MCF 10A (cell line): ENCODE measurements at regions of chr1 and their contacts with region 1.

Region 1: GRCh38 chr1:209839875-209840491 is 12.2 kb downstream of the UTP25 start:
- DNase-seq: peak; percentile 99
- H3K4me3 Mint-ChIP-seq: peak overlapping the region; percentile 29
- H3K27ac Mint-ChIP-seq: peak overlapping the region; percentile 82
- H3K4me1 Mint-ChIP-seq: peaks cover 30% of the 10 kb centered on the region
- H3K27me3 Mint-ChIP-seq: no peaks in the 10 kb centered on the region
- CTCF ChIP-seq: no peak

Region 2: DNA sequence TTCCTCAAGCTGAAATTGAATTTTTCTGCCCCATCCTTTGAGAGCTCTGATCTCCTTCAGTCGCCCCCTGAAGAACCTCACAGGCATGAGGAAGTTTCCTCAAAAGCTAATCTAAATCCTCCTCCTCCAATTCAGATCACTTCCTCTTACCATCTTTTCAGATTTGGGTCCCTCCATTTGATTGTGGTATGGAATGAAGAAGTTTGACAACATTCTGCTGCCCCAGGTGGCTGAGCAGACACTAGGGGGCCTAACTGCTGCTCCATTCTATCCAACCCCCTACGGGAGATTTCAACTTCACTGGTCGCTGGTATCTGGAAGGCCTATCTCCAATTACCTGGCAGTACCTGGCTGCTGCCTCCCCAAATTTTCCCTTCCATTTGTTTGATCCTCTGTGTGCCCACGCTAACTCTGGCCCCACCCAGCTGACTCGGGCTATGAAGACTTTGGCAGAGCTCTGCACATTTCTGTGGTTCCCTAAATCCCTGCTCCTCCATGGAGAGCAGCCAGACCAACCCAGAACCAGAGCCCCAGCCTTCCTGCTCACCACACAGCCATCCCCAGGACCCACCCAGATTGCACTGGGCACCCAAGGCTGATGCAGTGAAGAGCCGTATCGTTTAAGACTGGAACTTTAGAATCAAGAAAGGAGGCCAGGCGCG is 41.9 kb before region 1 on chr1:
- CTCF ChIA-PET with region 1: interaction called, 8 read pairs
- POLR2A ChIA-PET with region 1: interaction called, 11 read pairs
- intact Hi-C with region 1: no loop called
- DNase-seq: peak; percentile 74
- H3K4me3 Mint-ChIP-seq: peak overlapping the region; percentile 17
- H3K27ac Mint-ChIP-seq: no peak overlapping the region
- H3K4me1 Mint-ChIP-seq: peaks cover 28% of the 10 kb centered on the region
- H3K27me3 Mint-ChIP-seq: no peaks in the 10 kb centered on the region
- CTCF ChIP-seq: no peak

Region 3: GRCh38 chr1:209815931-209816341 is 24.0 kb before region 1 on chr1:
- CTCF ChIA-PET with region 1: interaction called, 1,144 read pairs
- POLR2A ChIA-PET with region 1: interaction called, 205 read pairs
- intact Hi-C with region 1: no loop called
- DNase-seq: peak; percentile 100
- H3K4me3 Mint-ChIP-seq: peak overlapping the region; percentile 44
- H3K27ac Mint-ChIP-seq: peak overlapping the region; percentile 91
- H3K4me1 Mint-ChIP-seq: peaks cover 29% of the 10 kb centered on the region
- H3K27me3 Mint-ChIP-seq: no peaks in the 10 kb centered on the region
- CTCF ChIP-seq: no peak

Region 4: DNA sequence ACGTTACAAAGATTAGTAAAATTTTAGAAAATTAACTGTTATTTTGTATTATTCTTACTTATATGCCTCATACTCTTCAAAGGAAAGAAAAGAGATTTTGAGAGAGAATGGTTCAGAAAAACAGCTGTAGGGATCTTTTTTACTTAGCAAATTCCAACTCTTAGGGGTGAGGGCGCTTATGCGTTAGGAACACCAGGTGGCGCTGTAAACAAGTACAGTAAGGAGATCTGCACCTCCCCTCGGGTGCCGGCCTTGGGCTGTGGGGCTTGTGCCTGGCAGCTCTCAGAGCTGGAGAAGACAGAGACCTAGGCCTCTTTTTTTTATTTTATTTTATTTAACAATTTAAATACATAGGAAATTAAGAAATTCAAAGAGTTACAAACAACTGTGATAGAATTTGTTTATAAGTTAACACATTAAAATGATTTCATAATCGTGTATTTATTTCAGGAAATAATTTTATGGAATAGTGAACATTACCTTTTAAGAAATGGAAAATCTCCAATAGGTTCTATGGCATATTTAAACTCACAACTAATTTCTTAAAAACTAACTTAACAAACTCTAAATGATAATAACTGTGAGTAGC is 20.4 kb after region 1 on chr1:
- CTCF ChIA-PET with region 1: interaction called, 156 read pairs
- POLR2A ChIA-PET with region 1: interaction called, 19 read pairs
- intact Hi-C with region 1: no loop called
- DNase-seq: peak; percentile 94
- H3K4me3 Mint-ChIP-seq: no peak overlapping the region
- H3K27ac Mint-ChIP-seq: peak overlapping the region; percentile 73
- H3K4me1 Mint-ChIP-seq: peaks cover 43% of the 10 kb centered on the region
- H3K27me3 Mint-ChIP-seq: no peaks in the 10 kb centered on the region
- CTCF ChIP-seq: peak; percentile 99

Region 5: GRCh38 chr1:209884665-209885117 is 44.7 kb after region 1 on chr1:
- CTCF ChIA-PET with region 1: interaction called, 5 read pairs
- POLR2A ChIA-PET with region 1: interaction called, 10 read pairs
- intact Hi-C with region 1: no loop called
- DNase-seq: peak; percentile 99
- H3K4me3 Mint-ChIP-seq: peak overlapping the region; percentile 0
- H3K27ac Mint-ChIP-seq: peak overlapping the region; percentile 81
- H3K4me1 Mint-ChIP-seq: peaks cover 70% of the 10 kb centered on the region
- H3K27me3 Mint-ChIP-seq: no peaks in the 10 kb centered on the region
- CTCF ChIP-seq: no peak

Region 6: DNA sequence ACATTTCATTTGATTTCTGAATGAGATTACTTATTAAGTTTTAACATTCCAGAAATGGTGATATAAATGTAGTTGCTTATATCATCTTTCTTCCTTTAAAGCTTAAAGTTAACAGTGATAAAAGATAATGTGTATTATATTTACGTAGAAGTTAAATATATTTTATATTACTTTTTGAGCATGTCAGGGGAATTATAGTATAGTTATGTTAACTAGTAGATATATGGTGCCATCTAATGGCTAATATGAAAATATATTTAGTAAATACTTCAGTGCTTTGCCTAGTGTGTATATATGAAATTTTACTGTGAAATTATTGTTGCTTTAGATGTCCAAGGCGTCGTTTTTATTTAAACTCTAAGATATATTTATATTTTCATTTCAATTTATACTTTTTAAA is 149.5 kb after region 1 on chr1:
- CTCF ChIA-PET with region 1: interaction called, 169 read pairs
- POLR2A ChIA-PET with region 1: interaction called, 8 read pairs
- intact Hi-C with region 1: no loop called
- DNase-seq: peak; percentile 42
- H3K4me3 Mint-ChIP-seq: no peak overlapping the region
- H3K27ac Mint-ChIP-seq: peak overlapping the region; percentile 70
- H3K4me1 Mint-ChIP-seq: peaks cover 16% of the 10 kb centered on the region
- H3K27me3 Mint-ChIP-seq: peaks cover 15% of the 10 kb centered on the region
- CTCF ChIP-seq: peak; percentile 74